Dorsolateral prefrontal cortex (tissue), 120 donors: ENCODE measurements at regions of chr3 and their contacts with region 1.

Region 1: DNA sequence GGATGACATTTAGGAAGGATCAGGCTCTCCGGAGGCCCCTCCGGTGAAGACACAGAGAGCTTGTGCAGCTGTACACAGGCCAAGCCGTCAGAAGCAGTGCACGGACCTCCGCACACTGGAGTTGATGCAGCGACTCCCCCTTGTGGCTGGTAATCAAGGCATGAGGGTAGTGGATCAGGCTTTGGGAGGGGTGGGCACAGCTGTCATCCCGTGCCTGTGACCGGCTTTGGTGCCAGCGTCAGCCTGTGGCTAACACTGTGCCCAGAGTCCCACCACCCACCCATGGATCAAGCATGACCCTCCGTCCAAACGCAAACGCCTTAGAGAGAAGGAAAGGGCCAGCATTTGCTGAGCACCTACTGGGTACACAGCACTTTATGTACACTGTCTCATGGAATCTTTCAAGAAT is 8.2 kb upstream of the GRIP2 start:
- DNase-seq: peak in 9 of 10 donors; percentile 38 to 76 (median 65)
- H3K4me3 ChIP-seq: no peak overlapping the region
- H3K27ac ChIP-seq: peak overlapping the region in 1 of 59 donors; percentile 18
- H3K27me3 ChIP-seq: peaks cover 0 to 12% (median 0%) of the 10 kb centered on the region in 45 donors
- CTCF ChIP-seq: peak; percentile 8 to 83 (median 62)

Region 2: GRCh38 chr3:14508961-14509795 is 39.1 kb before region 1 on chr3:
- intact Hi-C with region 1: loop called in 1 of 2 experiments (anchors 1 kb)
- DNase-seq: peak in 9 of 10 donors; percentile 44 to 67 (median 63)
- H3K4me3 ChIP-seq: peak overlapping the region in 14 of 59 donors; percentile 12 to 39 (median 24)
- H3K27ac ChIP-seq: peak overlapping the region in 2 of 59 donors; percentile 23 to 48
- H3K27me3 ChIP-seq: no peaks in the 10 kb centered on the region
- CTCF ChIP-seq: peak; percentile 79 to 100 (median 94)

Region 3: DNA sequence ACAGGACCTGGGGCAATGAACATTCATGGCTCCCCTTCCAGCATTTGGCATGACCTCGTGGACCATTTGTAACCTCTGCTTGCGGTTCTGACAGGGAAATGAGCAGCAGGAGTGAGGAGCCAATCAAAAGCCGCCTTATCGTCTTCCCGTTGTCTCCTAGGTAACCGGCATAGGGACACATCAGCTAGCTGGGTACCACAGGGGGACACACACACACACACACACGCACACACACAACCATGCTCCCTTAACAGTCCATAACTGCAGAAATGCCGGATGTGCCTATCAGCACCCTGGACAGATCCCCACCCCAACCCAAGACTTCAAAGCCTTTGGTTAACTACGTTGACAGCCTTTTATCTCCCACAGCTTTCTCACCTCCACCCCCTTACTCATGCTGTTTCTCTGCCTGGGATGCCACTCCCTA is 49.8 kb after region 1 on chr3:
- intact Hi-C with region 1: no loop called
- DNase-seq: peak in 4 of 10 donors; percentile 9 to 48 (median 44)
- H3K4me3 ChIP-seq: peak overlapping the region in 27 of 59 donors; percentile 4 to 50 (median 25)
- H3K27ac ChIP-seq: no peak overlapping the region
- H3K27me3 ChIP-seq: peaks cover 0 to 55% (median 16%) of the 10 kb centered on the region in 45 donors
- CTCF ChIP-seq: no peak